B cell (primary cell): ENCODE measurements at regions of chr9 and their contacts with region 1.

Region 1: DNA sequence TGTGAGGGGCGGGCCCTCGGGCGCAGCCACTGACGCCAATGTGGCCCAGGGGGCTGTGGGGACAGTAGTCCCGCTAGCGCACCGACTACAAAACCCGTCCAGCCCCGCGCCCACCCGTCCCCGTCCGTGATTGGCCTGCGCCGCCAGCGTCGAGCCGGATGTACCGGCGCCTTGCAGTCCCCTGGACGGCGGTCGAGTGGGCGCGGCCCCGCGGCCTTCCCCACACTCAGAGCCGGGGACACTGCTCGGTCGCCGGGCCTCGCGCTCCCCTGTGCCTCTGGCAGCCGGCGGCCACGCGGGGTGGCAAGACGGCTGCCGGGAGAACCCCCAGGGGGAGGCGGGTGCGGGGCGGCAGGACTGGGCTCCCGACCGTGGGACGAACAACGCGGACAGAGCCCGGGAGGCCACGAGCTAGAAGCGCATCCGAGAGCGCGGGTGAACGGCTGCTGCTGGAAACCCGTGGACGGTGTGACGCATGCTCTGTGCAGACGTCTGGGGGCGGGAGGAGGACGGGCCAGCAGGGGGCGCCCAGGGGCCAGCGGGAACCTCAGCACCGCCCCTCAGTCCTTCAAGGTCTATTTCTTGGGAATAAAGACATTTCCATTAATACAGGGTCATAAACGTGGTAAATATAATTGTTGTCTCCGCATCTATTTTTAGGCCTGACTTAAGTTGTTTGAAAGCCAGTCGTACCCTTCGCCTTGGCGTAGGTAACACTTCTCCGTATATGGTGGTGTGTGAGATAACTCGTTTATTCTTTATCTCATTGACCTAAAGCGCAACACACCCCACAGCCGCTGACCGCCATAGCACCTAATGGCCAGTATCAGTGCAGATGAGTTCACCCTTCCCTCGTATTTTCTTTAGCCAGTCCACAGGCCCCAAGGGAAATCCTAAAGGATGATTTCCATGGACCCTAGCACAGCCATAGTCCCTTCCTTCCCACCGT is 629 bp upstream of the BICD2 start:
- DNase-seq: peak; percentile 98
- ATAC-seq: peak; percentile 90
- H3K4me3 ChIP-seq: peak overlapping the region; percentile 72 to 91 (median 75)
- H3K4me3 Mint-ChIP-seq: peak overlapping the region; percentile 98
- H3K27ac ChIP-seq: peak overlapping the region; percentile 96 to 99
- H3K27ac Mint-ChIP-seq: peak overlapping the region; percentile 99
- H3K4me1 ChIP-seq: peaks cover 53 to 61% of the 10 kb centered on the region in 2 donors
- H3K4me1 Mint-ChIP-seq: peaks cover 65% of the 10 kb centered on the region
- H3K27me3 ChIP-seq: no peaks in the 10 kb centered on the region
- H3K27me3 Mint-ChIP-seq: no peaks in the 10 kb centered on the region
- CTCF ChIP-seq: peak; percentile 96

Region 2: GRCh38 chr9:92438900-92439526 is 326.2 kb before region 1 on chr9:
- CTCF ChIA-PET with region 1: no interaction called
- POLR2A ChIA-PET with region 1: no interaction called
- intact Hi-C with region 1: no loop called
- DNase-seq: peak; percentile 13
- ATAC-seq: no peak
- H3K4me3 ChIP-seq: no peak overlapping the region
- H3K4me3 Mint-ChIP-seq: no peak overlapping the region
- H3K27ac ChIP-seq: no peak overlapping the region
- H3K27ac Mint-ChIP-seq: no peak overlapping the region
- H3K4me1 ChIP-seq: no peaks in the 10 kb centered on the region
- H3K4me1 Mint-ChIP-seq: no peaks in the 10 kb centered on the region
- H3K27me3 ChIP-seq: no peaks in the 10 kb centered on the region
- H3K27me3 Mint-ChIP-seq: no peaks in the 10 kb centered on the region
- CTCF ChIP-seq: peak; percentile 66

Region 3: GRCh38 chr9:92669890-92670708 is 95.2 kb before region 1 on chr9 and contains the start of gene IPPK:
- CTCF ChIA-PET with region 1: interaction called, 10 read pairs
- POLR2A ChIA-PET with region 1: interaction called, 13 read pairs
- intact Hi-C with region 1: loop called (anchors 1 kb)
- DNase-seq: peak; percentile 98
- ATAC-seq: peak; percentile 92
- H3K4me3 ChIP-seq: peak within 1 kb of the TSS; percentile 93 to 100 (median 99)
- H3K4me3 Mint-ChIP-seq: peak within 1 kb of the TSS; percentile 97
- H3K27ac ChIP-seq: peak within 1 kb of the TSS; percentile 87 to 99
- H3K27ac Mint-ChIP-seq: peak within 1 kb of the TSS; percentile 95
- H3K4me1 ChIP-seq: peaks cover 17 to 23% of the 10 kb centered on the region in 2 donors
- H3K4me1 Mint-ChIP-seq: peaks cover 27% of the 10 kb centered on the region
- H3K27me3 ChIP-seq: no peaks in the 10 kb centered on the region
- H3K27me3 Mint-ChIP-seq: no peaks in the 10 kb centered on the region
- CTCF ChIP-seq: no peak
- total RNA-seq, gene IPPK: 6.8 and 8.5 TPM in 2 replicates

Region 4: GRCh38 chr9:92728831-92729734 is 36.2 kb before region 1 on chr9:
- CTCF ChIA-PET with region 1: interaction called, 55 read pairs
- POLR2A ChIA-PET with region 1: interaction called, 20 read pairs
- intact Hi-C with region 1: loop called (anchors 1 kb)
- DNase-seq: peak; percentile 80
- ATAC-seq: peak; percentile 92
- H3K4me3 ChIP-seq: peak overlapping the region in 4 of 5 experiments; percentile 31 to 67 (median 52)
- H3K4me3 Mint-ChIP-seq: peak overlapping the region; percentile 91
- H3K27ac ChIP-seq: peak overlapping the region; percentile 58 to 76
- H3K27ac Mint-ChIP-seq: peak overlapping the region; percentile 95
- H3K4me1 ChIP-seq: peaks cover 63 to 81% of the 10 kb centered on the region in 2 donors
- H3K4me1 Mint-ChIP-seq: peaks cover 84% of the 10 kb centered on the region
- H3K27me3 ChIP-seq: no peaks in the 10 kb centered on the region
- H3K27me3 Mint-ChIP-seq: no peaks in the 10 kb centered on the region
- CTCF ChIP-seq: peak; percentile 78

Region 5: DNA sequence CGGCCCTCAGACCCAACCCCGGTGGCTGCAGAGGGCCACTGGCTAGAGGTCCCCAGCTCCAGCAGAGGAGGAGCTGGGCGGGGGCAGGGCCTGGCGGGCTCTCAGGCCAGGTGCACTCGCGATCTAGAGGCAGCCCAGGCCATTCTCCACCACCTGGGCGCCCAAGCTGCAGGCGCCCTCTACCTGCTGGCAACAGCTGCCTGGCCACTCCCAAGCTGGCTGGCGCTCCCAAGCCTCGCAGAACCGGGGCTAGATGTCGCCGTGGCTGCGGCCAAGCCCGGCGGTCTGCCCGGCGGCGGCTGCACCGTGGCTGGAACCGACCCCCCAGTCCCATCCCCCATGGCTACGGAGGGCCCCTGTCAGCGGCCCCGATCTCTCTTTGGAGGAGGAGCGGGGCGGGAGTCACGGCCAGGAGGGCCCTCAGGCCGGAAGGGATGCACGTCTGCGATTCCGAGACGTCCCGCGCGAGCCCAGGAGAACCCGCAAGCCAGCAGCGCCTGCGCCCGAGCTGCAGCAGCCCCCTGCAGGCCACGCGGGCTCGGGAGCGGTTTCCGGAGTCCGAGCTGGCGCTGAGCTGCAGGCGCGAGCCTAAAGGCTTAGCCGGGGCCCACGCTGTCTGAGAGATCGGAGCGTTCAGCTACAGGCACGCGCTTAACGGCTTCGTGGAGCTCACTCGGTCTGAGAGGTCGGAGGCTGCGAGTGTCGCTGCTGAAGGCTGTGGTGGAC is 43.6 kb after region 1 on chr9:
- CTCF ChIA-PET with region 1: interaction called, 3 read pairs
- POLR2A ChIA-PET with region 1: no interaction called
- intact Hi-C with region 1: loop called (anchors 1 kb)
- DNase-seq: peak; percentile 75
- ATAC-seq: peak; percentile 72
- H3K4me3 ChIP-seq: peak overlapping the region in 4 of 5 experiments; percentile 39 to 74 (median 56)
- H3K4me3 Mint-ChIP-seq: peak overlapping the region; percentile 91
- H3K27ac ChIP-seq: no peak overlapping the region
- H3K27ac Mint-ChIP-seq: no peak overlapping the region
- H3K4me1 ChIP-seq: peaks cover 32 to 36% of the 10 kb centered on the region in 2 donors
- H3K4me1 Mint-ChIP-seq: peaks cover 25% of the 10 kb centered on the region
- H3K27me3 ChIP-seq: peaks cover 0 to 65% (median 56%) of the 10 kb centered on the region in 4 experiments
- H3K27me3 Mint-ChIP-seq: peaks cover 48% of the 10 kb centered on the region
- CTCF ChIP-seq: peak; percentile 30

Region 6: GRCh38 chr9:92963831-92964626 is 198.8 kb after region 1 on chr9:
- CTCF ChIA-PET with region 1: no interaction called
- POLR2A ChIA-PET with region 1: no interaction called
- intact Hi-C with region 1: loop called (anchors 10 kb)
- DNase-seq: peak; percentile 88
- ATAC-seq: peak; percentile 80
- H3K4me3 ChIP-seq: peak overlapping the region; percentile 75 to 92 (median 86)
- H3K4me3 Mint-ChIP-seq: peak overlapping the region; percentile 96
- H3K27ac ChIP-seq: peak overlapping the region; percentile 78 to 83
- H3K27ac Mint-ChIP-seq: peak overlapping the region; percentile 98
- H3K4me1 ChIP-seq: peaks cover 58 to 74% of the 10 kb centered on the region in 2 donors
- H3K4me1 Mint-ChIP-seq: peaks cover 75% of the 10 kb centered on the region
- H3K27me3 ChIP-seq: no peaks in the 10 kb centered on the region
- H3K27me3 Mint-ChIP-seq: no peaks in the 10 kb centered on the region
- CTCF ChIP-seq: no peak

Region 7: DNA sequence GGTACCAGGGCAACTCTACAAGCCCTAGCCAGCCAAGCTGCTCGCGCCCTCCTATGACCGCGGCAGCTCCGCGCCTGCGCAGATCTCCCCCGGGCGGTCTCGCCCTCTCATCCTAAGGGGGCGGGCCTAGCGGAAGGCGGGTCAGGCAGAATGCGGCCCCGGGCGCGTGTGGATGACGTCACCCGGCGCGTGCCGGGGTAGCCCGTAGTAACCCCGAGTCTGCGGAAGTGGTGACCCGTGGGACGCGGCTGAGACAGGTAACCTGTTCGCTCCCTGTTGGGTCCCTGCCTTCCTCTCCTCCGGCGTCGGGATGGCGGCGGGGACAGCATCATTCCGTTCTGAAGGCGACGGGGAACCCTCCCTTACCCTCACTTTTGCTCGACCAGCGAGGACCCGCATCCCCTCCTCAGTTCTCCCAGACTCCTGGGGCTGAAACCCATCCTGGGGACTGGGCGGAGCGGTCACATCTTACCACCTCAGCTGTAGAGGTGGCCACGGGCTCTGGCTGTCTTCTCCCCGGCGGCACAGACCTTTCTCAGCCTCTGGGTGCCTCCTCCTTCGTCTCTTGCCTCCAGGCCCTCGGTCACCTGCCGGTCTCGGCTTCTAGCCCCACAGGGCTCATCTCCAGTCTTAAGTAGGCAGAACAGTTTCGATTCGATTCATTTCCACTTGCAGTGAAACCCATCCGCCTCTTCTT is 1961.4 kb after region 1 on chr9 and contains the start of gene AOPEP:
- CTCF ChIA-PET with region 1: no interaction called
- POLR2A ChIA-PET with region 1: no interaction called
- intact Hi-C with region 1: loop called (anchors 10 kb)
- DNase-seq: peak; percentile 98
- ATAC-seq: peak; percentile 97
- H3K4me3 ChIP-seq: peak within 1 kb of the TSS; percentile 72 to 96 (median 81)
- H3K4me3 Mint-ChIP-seq: peak within 1 kb of the TSS; percentile 97
- H3K27ac ChIP-seq: peak within 1 kb of the TSS; percentile 91 to 94
- H3K27ac Mint-ChIP-seq: peak within 1 kb of the TSS; percentile 96
- H3K4me1 ChIP-seq: peaks cover 10 to 11% of the 10 kb centered on the region in 2 donors
- H3K4me1 Mint-ChIP-seq: peaks cover 16% of the 10 kb centered on the region
- H3K27me3 ChIP-seq: no peaks in the 10 kb centered on the region
- H3K27me3 Mint-ChIP-seq: no peaks in the 10 kb centered on the region
- CTCF ChIP-seq: no peak
- total RNA-seq, gene AOPEP: 35.8 and 37.6 TPM in 2 replicates